ENCODE measurements at regions of chr16 and their contacts with region 1.

Region 1: GRCh38 chr16:66751303-66751991 is at the start of gene DYNC1LI2:
- DNase-seq: peak; percentile 90
- total RNA-seq, gene DYNC1LI2: 123 TPM

Region 2: DNA sequence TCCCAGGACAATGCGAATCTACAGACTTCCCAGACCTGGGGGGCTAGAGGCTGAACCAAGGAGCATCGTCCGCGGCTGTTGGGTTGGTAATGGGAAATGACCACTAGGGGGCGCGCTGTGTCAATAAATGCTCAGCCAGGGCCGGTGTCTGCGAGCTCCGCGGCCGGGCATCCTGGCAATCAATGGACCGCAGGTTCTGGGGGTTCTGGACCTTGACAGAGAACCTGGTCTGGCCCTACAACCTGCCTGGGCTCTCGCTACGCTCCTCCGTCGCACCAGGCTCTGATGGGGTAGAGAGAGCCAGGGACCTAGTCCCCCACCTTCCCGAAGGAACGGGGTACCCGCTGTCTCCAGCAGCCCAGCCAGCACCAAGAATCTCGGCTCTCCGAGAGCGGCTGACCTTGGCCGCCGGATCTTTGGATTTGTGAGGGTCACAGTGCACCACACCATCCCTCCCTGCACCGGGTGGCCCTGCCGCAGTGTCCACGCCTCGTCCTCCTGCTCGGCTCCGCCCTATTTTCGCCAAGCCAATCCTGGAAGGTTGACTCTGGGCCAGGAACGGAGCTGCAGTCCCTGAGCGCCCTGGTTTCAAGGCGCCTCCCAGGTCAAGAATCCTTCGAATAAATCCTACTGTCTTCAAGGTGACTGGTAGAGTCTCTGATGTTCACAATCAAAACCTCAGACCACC is 344.8 kb before region 1 on chr16:
- intact Hi-C with region 1: loop called (anchors 5 kb)
- DNase-seq: peak; percentile 95

Region 3: GRCh38 chr16:66741169-66741900 is 10.1 kb before region 1 on chr16:
- intact Hi-C with region 1: loop called (anchors 1 kb)
- DNase-seq: peak; percentile 93

Region 4: DNA sequence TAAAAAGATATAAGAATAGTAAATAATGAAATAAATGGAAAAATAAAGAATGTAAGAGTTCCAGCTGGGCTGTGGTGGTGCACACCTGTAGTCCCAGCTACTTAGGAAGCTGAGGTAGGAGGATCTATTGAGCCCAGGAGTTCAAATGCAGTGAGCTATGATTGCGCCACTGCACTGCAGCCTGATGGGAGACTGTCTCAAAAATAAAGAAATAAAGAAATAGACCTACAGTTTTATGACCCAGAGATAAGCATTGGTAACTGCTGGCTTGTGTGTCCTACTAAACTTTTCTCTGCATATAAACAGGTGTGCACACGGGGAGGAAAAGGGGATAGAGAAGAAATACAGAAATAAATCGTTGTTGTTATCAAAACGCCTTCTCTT is 121.1 kb after region 1 on chr16:
- intact Hi-C with region 1: loop called (anchors 5 kb)
- DNase-seq: no peak

Measured in cardiac septum (tissue), 1 donor.